ENCODE measurements at regions of chr10 and their contacts with region 1.

Region 1: DNA sequence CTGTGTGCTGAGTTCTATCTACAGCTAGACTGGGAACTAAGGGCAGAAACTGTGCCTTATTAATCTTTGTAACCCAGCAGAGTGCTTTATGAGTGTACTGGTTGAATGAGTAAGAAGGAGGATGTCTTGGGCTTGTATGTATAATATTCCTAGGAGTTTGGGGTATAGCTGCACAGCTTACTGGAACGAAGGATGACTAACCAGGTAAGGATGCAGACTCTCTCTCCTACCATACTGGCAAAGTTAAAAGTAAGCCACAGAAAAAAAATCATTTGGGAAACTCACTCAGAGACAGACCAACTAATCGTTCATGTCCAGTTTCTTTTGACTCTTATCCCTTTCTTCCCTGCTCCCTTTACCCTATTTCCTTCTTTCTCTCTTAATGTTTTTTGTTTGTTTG is 1.4 kb upstream of the DHTKD1 start:
- DNase-seq: peak; percentile 62
- ATAC-seq: peak; percentile 39
- H3K4me3 ChIP-seq: no peak overlapping the region
- H3K27ac ChIP-seq: peak overlapping the region; percentile 23; the same call in 1 of the 2 replicates
- H3K4me1 ChIP-seq: peaks cover 7% of the 10 kb centered on the region; the same call in 1 of the 2 replicates
- H3K27me3 ChIP-seq: no peaks in the 10 kb centered on the region
- CTCF ChIP-seq: no peak

Region 2: GRCh38 chr10:12018438-12019282 is 48.7 kb before region 1 on chr10:
- CTCF ChIA-PET with region 1: no interaction called
- POLR2A ChIA-PET with region 1: no interaction called
- intact Hi-C with region 1: no loop called
- DNase-seq: no peak
- ATAC-seq: no peak
- H3K4me3 ChIP-seq: no peak overlapping the region
- H3K27ac ChIP-seq: no peak overlapping the region
- H3K4me1 ChIP-seq: no peaks in the 10 kb centered on the region
- H3K27me3 ChIP-seq: no peaks in the 10 kb centered on the region
- CTCF ChIP-seq: no peak

Region 3: DNA sequence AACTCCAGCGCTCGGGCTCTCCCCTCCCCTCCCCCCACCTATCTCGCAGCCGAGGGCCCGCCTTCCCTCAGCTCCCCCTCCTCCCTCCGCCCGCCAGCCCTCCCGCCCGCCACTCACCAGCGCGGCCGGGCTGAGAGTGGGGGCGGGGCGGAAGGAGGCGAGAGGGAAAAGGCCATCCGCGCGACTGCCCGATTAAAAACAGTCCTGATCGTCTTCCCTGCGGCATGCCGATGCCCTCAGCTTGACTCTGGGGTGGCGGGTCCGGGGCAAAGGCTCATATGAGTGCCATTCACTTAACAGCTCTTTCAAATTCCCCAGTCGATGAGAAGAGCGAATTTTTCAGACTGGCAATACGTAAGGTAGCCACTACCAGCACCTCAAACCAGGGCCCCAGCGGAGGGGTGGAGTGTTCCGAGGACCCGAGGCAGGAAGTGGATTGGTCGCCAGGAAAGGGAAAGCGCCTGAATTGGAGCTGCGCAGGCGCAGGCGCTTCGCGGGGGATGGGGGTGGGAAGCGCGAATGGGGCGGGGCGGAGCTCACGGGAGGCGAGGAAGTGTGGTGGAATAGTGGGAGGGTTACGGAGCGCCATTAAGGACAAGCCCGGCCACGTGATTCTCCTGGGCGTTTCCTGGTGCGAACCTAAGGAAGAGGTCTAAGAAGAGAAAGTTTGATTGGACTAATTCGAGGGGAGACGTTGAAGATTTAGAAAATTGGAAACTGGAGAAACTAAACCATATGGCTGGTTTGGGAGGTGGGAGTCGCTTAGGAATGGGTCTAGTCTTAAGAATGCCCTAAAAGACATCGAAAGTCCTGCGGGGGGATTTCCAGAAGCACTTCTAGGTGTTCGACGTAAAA is 24.3 kb before region 1 on chr10 and contains the start of gene UPF2:
- CTCF ChIA-PET with region 1: no interaction called
- POLR2A ChIA-PET with region 1: no interaction called
- intact Hi-C with region 1: loop called (anchors 1 kb)
- DNase-seq: peak; percentile 89
- ATAC-seq: peak; percentile 82
- H3K4me3 ChIP-seq: peak within 1 kb of the TSS; percentile 83
- H3K27ac ChIP-seq: peak within 1 kb of the TSS; percentile 95
- H3K4me1 ChIP-seq: peaks cover 11% of the 10 kb centered on the region
- H3K27me3 ChIP-seq: no peaks in the 10 kb centered on the region
- CTCF ChIP-seq: no peak
- total RNA-seq, gene UPF2: 10.4 and 12.0 TPM in 2 replicates